Gastrocnemius medialis (tissue), 4 donors: ENCODE measurements at regions of chr12 and their contacts with region 1.

Region 1: DNA sequence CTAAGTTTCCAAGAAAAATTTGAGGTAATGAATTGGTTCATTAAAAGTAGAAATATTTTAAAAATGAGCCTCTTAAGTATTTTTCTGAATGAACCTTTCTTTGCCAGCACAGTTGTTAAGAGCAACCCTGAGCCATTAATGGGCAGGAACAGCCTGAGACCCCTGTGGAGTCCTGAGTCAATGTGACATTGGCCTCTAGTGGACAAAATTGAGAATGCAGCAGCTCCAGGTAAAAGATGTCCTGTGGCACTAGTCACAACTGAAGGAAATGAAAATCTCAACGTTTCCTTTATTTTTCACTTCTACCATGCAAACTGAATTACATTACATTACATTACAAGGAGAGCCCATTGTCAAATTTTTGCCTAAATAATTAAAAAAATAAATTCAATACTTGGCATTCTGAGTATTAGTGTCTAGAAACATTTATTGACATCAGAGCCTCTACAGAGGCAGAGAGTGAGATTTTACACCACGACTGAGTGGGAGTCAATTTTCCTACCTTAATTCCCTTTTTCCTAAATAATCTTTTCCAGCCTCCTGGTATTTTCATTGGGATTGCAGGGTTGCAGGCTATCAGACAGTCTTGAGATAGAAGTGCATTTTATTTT is 135.7 kb downstream of the PPM1H start:
- DNase-seq: no peak
- ATAC-seq: peak; percentile 62 to 67
- H3K4me3 ChIP-seq: no peak overlapping the region
- H3K27ac ChIP-seq: no peak overlapping the region
- H3K4me1 ChIP-seq: no peaks in the 10 kb centered on the region
- H3K27me3 ChIP-seq: no peaks in the 10 kb centered on the region
- CTCF ChIP-seq: peak; percentile 71 to 90 (median 83)
- POLR2A ChIP-seq: no peak

Region 2: DNA sequence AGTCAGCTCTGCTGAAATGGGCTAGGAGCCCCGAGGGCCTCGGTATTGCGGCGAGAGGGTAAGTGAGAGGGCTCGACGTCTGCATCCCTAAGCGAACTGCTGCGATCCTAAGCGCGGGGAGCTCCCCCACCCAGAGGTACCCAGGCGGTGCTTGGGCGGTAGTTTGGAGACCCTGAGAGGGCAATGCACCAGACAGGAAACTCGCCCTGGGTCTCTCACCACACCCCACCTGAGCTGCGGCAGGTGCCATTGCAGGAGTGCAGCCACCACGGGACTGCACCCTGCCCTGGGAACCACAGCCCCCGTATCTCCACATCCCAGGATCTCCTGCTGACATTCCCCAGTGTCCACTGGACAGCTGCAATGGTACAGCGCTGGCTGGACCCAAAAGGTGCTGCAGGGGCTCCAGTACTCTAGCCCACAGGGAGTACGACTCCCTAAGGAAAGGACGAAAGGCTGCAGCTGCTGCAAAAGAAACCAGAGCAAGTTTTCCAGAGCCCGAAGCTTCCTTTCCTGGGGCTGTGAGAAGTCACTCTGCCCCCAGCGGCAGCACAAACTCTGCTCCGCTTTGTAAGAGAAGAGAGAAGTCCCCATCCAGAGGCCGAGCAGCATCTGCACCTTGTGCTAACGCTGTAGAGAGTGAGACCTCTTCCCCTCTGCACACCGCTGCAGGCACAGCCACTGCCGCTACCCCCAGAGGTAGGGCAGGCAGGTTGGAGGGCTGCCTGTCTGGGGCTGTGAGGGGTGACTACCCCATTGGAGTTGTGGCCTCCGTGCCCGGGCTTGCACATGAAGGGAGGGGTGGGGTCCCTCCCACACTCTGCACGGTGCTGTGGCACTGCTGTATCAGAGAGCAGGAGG is 363.7 kb before region 1 on chr12:
- in situ Hi-C with region 1: loop called (anchors 5 to 10 kb)
- intact Hi-C with region 1: loop called (anchors 1 kb)
- DNase-seq: no peak
- ATAC-seq: peak in 1 of 2 donors; percentile 26
- H3K4me3 ChIP-seq: peak overlapping the region; percentile 44 to 51 (median 48)
- H3K27ac ChIP-seq: no peak overlapping the region
- H3K4me1 ChIP-seq: peaks cover 4 to 6% of the 10 kb centered on the region in 2 donors
- H3K27me3 ChIP-seq: peaks cover 21 to 36% (median 23%) of the 10 kb centered on the region in 3 donors
- CTCF ChIP-seq: peak in 1 of 5 experiments; percentile 37
- POLR2A ChIP-seq: no peak

Region 3: DNA sequence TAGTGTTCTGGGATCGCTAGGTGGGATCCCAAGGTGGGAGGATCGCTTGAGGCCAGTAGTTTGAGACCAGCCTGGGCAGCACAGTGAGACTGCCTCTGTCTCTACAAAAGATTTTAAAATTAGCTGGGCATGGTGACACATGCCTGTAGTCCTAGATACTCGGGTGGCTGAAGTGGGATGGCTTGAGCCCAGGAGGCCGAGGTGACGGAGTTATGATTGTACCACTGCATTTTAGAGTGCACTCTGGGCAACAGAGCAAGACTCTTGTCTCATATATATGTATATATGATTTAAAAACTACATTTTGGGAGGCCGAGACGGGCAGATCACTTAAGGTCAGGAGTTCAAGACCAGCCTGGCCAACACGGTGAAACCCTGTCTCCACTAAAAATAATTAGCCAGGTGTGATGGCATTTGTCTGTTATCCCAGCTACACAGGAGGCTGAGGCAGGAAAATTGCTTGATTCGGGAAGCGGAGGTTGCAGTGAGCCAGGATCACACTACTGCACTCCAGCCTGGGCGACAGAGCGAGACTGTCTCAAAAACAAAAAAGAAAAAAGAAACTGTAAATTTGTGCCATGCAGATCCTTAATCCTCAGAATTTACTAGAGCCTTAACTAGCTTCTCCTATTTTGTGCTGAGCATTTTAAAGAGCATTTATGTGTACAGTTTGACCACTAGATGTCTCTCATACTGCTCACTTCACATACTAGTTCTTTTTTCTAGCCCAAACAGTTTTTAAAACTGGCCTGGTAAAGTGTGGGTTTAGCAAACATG is 217.8 kb before region 1 on chr12:
- in situ Hi-C with region 1: loop called (anchors 5 to 10 kb)
- intact Hi-C with region 1: loop called (anchors 1 kb)
- DNase-seq: no peak
- ATAC-seq: peak; percentile 60 to 80
- H3K4me3 ChIP-seq: no peak overlapping the region
- H3K27ac ChIP-seq: no peak overlapping the region
- H3K4me1 ChIP-seq: no peaks in the 10 kb centered on the region
- H3K27me3 ChIP-seq: no peaks in the 10 kb centered on the region
- CTCF ChIP-seq: peak; percentile 38 to 68 (median 64)
- POLR2A ChIP-seq: no peak

Region 4: DNA sequence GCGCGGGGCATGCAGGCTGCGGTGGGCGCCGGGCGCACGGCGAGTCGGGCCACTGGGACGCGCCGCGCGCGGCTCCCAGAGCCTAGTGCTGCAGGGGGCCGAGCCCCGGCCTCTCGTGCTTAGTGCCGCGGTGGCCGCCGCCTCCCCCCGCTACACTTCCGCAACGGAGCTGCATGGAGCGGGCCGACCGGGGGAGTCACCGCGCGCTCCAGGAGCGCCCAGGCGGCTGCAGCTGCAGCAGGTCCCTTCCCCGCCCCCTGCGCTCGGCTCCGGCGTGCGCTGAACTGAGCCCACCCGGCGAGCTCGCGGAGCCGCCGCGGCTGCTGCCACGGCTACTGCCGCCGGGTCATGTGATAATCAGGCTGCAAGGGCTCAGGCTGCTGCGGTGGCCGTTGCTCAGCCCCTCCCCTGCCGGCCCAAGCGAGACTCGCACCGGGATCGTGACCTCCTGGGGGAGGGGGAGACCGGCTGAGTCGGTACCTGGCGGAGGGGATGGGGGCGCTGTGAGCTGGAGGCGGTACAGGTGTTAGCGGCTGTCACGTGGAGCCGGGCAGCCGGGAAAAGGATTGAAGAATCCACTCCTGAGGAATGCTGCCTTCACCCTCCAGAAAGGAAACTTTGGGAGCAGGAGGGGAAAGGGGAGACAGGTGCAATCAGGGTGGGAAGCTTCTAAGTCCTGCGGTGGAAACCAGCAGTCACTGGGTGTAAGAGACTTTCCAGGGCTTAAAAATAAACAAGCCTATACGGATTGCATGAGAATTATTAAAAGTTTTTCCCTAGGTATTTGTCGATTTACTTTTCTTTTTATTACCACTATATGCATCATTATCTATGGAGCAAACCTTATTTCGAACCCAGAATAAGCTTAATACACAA is 135.8 kb after region 1 on chr12 and contains the start of gene PPM1H:
- in situ Hi-C with region 1: no loop called
- intact Hi-C with region 1: no loop called
- DNase-seq: peak; percentile 50 to 68
- ATAC-seq: peak; percentile 72
- H3K4me3 ChIP-seq: peak within 1 kb of the TSS; percentile 64 to 92 (median 72)
- H3K27ac ChIP-seq: peak within 1 kb of the TSS; percentile 27 to 87 (median 66)
- H3K4me1 ChIP-seq: peaks cover 5 to 6% of the 10 kb centered on the region in 2 donors
- H3K27me3 ChIP-seq: no peaks in the 10 kb centered on the region
- CTCF ChIP-seq: peak; percentile 25 to 59 (median 52)
- POLR2A ChIP-seq: peak in 1 of 2 donors; percentile 60
- total RNA-seq, gene PPM1H: 0.46 to 3.4 (median 1.3) TPM